CD8-positive, alpha-beta T cell (primary cell): ENCODE measurements at regions of chr12 and their contacts with region 1.

Region 1: DNA sequence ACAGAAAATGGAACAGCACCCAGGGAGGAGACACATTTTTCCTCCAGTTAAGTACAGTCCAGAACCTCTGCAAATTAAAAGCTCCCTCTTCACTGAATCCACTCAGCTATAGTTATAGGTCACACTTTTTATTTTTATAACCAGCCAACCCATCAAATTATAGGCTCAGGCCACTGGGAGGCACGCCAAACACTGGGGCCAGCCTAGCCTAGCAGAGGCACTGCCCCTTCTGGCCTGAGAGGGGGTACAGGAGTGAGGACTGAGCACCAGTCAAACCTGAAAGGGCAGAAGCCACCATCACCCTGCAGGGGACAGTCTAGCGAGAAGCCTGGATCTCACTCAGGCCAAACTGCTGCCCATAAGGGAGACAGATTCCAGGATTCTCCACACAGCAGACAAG is 19.3 kb downstream of the FMNL3 start:
- DNase-seq: no peak
- ATAC-seq: no peak
- H3K4me3 ChIP-seq: no peak overlapping the region
- H3K4me3 Mint-ChIP-seq: no peak overlapping the region
- H3K27ac ChIP-seq: no peak overlapping the region
- H3K27ac Mint-ChIP-seq: no peak overlapping the region
- H3K4me1 ChIP-seq: peaks cover 20% of the 10 kb centered on the region
- H3K4me1 Mint-ChIP-seq: peaks cover 61% of the 10 kb centered on the region
- H3K27me3 ChIP-seq: no peaks in the 10 kb centered on the region
- H3K27me3 Mint-ChIP-seq: no peaks in the 10 kb centered on the region
- CTCF ChIP-seq: no peak

Region 2: DNA sequence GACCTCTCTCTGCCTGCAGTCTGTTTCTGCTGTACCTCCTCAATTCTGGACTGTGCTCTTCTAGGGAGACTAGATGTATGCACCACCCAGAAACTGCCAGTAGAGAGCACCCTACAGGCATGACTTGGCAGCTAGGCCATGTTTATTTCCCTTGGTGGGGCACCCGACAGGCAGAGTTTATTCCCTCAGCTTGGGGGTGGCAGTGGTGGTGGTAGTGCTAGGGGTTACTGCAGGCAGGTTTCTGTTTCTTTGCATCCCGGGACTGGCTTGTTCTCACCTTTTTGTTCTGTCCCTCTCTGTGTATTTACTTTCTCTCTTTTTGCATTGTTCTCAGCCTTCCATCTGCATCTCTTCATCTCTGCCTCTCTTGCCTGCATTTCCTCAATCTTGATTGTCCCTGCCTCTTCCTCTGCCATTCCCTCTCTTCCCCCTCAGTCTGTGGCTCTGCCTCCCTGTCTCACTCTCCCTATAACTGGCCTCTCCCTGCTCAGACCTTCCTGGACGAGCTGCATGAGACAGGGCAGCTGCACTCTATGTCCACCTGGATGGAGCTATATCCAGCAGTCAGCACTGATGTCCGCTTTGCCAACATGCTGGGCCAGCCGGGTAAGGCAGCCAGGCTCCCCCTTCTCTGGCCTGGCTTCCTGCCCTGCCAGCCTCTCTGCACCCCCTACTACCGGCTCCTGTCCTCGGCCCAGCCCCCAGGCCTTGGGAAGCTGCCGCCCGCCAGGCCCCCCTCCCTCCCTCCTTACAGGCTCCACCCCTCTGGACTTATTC is 50.8 kb before region 1 on chr12:
- CTCF ChIA-PET with region 1: interaction called, 10 read pairs
- POLR2A ChIA-PET with region 1: no interaction called
- intact Hi-C with region 1: no loop called
- DNase-seq: peak in 8 of 9 experiments; percentile 39 to 76 (median 62)
- ATAC-seq: peak; percentile 99
- H3K4me3 ChIP-seq: no peak overlapping the region
- H3K4me3 Mint-ChIP-seq: no peak overlapping the region
- H3K27ac ChIP-seq: no peak overlapping the region
- H3K27ac Mint-ChIP-seq: peak overlapping the region; percentile 46
- H3K4me1 ChIP-seq: peaks cover 21% of the 10 kb centered on the region
- H3K4me1 Mint-ChIP-seq: peaks cover 29% of the 10 kb centered on the region
- H3K27me3 ChIP-seq: no peaks in the 10 kb centered on the region
- H3K27me3 Mint-ChIP-seq: no peaks in the 10 kb centered on the region
- CTCF ChIP-seq: peak; percentile 65

Region 3: DNA sequence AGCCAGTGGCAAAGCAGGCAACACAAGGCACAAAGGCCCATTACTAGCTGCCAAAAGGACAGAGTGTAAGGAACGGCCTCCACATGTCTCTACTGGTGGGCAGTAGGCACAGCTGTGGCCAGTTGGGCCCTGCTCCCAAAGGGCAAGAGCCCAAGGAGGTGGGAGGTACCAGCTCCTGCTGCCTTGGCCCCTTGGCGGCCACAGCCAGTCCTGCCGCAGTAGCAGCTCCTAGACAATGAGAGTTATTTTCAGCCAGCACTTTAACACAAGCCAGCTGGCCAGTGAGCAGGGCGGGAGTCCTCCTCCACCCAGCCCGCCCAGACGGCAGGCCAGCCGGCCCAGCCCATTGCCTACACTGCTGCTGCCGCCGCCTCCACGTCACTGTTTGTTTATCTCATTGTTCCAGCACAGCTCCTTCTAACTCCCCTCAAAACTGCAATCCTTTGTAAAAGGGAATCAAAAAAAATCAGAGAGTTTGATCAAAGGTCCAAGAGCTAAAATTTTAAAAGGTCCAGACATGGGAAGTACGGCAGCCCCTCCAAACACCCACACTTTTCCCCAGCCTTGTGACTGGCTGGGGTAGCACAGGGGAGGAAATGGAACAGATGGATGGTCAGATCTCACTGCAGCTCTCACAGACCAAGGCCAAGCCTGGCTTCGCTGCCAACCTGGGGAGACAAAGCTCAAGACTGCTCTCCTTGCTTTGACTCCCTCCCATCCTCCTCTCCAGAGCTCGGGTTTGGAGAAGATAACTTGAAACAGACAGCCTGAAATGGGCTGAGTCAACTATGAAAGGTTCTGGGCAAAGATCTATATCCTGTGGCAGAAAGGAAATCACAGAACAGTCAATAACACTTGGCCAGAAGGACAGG is 14.3 kb before region 1 on chr12:
- CTCF ChIA-PET with region 1: interaction called, 12 read pairs
- POLR2A ChIA-PET with region 1: interaction called, 14 read pairs
- intact Hi-C with region 1: loop called in 1 of 2 experiments (anchors 2 kb)
- DNase-seq: peak in 3 of 9 experiments; percentile 18 to 30 (median 26)
- ATAC-seq: no peak
- H3K4me3 ChIP-seq: no peak overlapping the region
- H3K4me3 Mint-ChIP-seq: peak overlapping the region; percentile 26
- H3K27ac ChIP-seq: peak overlapping the region in 1 of 2 experiments; percentile 92
- H3K27ac Mint-ChIP-seq: peak overlapping the region; percentile 98
- H3K4me1 ChIP-seq: peaks cover 66% of the 10 kb centered on the region
- H3K4me1 Mint-ChIP-seq: peaks cover 84% of the 10 kb centered on the region
- H3K27me3 ChIP-seq: no peaks in the 10 kb centered on the region
- H3K27me3 Mint-ChIP-seq: no peaks in the 10 kb centered on the region
- CTCF ChIP-seq: no peak

Region 4: GRCh38 chr12:49698619-49699545 is 10.9 kb after region 1 on chr12:
- CTCF ChIA-PET with region 1: interaction called, 11 read pairs
- POLR2A ChIA-PET with region 1: interaction called, 3 read pairs
- intact Hi-C with region 1: no loop called
- DNase-seq: peak in 6 of 9 experiments; percentile 16 to 69 (median 46)
- ATAC-seq: peak; percentile 74
- H3K4me3 ChIP-seq: peak overlapping the region; percentile 15 to 42
- H3K4me3 Mint-ChIP-seq: peak overlapping the region; percentile 84
- H3K27ac ChIP-seq: peak overlapping the region in 1 of 2 experiments; percentile 56
- H3K27ac Mint-ChIP-seq: peak overlapping the region; percentile 87
- H3K4me1 ChIP-seq: peaks cover 29% of the 10 kb centered on the region
- H3K4me1 Mint-ChIP-seq: peaks cover 64% of the 10 kb centered on the region
- H3K27me3 ChIP-seq: no peaks in the 10 kb centered on the region
- H3K27me3 Mint-ChIP-seq: no peaks in the 10 kb centered on the region
- CTCF ChIP-seq: no peak